ENCODE measurements at regions of chr12 and their contacts with region 1.

Region 1: GRCh38 chr12:122726080-122726558 is 4.5 kb downstream of the HCAR1 start:
- DNase-seq: peak; percentile 69
- ATAC-seq: no peak
- H3K4me3 ChIP-seq: no peak overlapping the region
- H3K27ac ChIP-seq: peak overlapping the region; percentile 55
- H3K4me1 ChIP-seq: peaks cover 83% of the 10 kb centered on the region
- H3K27me3 ChIP-seq: no peaks in the 10 kb centered on the region
- CTCF ChIP-seq: no peak
- EP300 ChIP-seq: peak in 1 of 2 experiments; percentile 33; a peak in 2 of 4 replicates
- POLR2A ChIP-seq: no peak
- RAD21 ChIP-seq: no peak

Region 2: GRCh38 chr12:122669397-122670070 is 56.6 kb before region 1 on chr12:
- CTCF ChIA-PET with region 1: no interaction called
- POLR2A ChIA-PET with region 1: no interaction called
- in situ Hi-C with region 1: no loop called
- intact Hi-C with region 1: loop called (anchors 10 kb)
- DNase-seq: no peak
- ATAC-seq: no peak
- H3K4me3 ChIP-seq: no peak overlapping the region
- H3K27ac ChIP-seq: no peak overlapping the region
- H3K4me1 ChIP-seq: peaks cover 29% of the 10 kb centered on the region
- H3K27me3 ChIP-seq: no peaks in the 10 kb centered on the region
- CTCF ChIP-seq: no peak
- EP300 ChIP-seq: no peak
- POLR2A ChIP-seq: no peak
- RAD21 ChIP-seq: no peak